ENCODE measurements at regions of chr19 and their contacts with region 1.

Region 1: GRCh38 chr19:17555480-17555928 is at the start of gene COLGALT1:
- DNase-seq: peak; percentile 77
- ATAC-seq: peak; percentile 94
- H3K4me3 ChIP-seq: peak within 1 kb of the TSS; percentile 88
- H3K27ac ChIP-seq: peak within 1 kb of the TSS; percentile 86
- H3K4me1 ChIP-seq: 0 out of 2 replicates have a peak, but pooled peaks cover 4% of the 10 kb centered on the region
- H3K27me3 ChIP-seq: no peaks in the 10 kb centered on the region
- CTCF ChIP-seq: no peak
- EP300 ChIP-seq: no peak
- POLR2A ChIP-seq: no peak
- RAD21 ChIP-seq: no peak
- polyA plus RNA-seq, gene COLGALT1: 1.2 to 3.5 TPM

Region 2: GRCh38 chr19:17303167-17303939 is 252.2 kb before region 1 on chr19 and contains the start of gene ABHD8:
- CTCF ChIA-PET with region 1: no interaction called
- POLR2A ChIA-PET with region 1: no interaction called
- RAD21 ChIA-PET with region 1: no interaction called
- SMC1A ChIA-PET with region 1: no interaction called
- in situ Hi-C with region 1: no loop called
- intact Hi-C with region 1: no loop called
- DNase-seq: peak; percentile 72
- ATAC-seq: peak; percentile 89
- H3K4me3 ChIP-seq: peak within 1 kb of the TSS; percentile 96
- H3K27ac ChIP-seq: peak within 1 kb of the TSS; percentile 69
- H3K4me1 ChIP-seq: peaks cover 16% of the 10 kb centered on the region
- H3K27me3 ChIP-seq: no peaks in the 10 kb centered on the region
- CTCF ChIP-seq: peak; percentile 24 to 54 (median 30); a peak in 3 of 6 replicates
- EP300 ChIP-seq: no peak
- POLR2A ChIP-seq: peak; percentile 66; the same call in 1 of the 2 replicates
- RAD21 ChIP-seq: no peak
- polyA plus RNA-seq, gene ABHD8: 0.03 to 0.04 TPM

Region 3: GRCh38 chr19:17511724-17512573 is 43.6 kb before region 1 on chr19:
- CTCF ChIA-PET with region 1: interaction called, 9 read pairs
- POLR2A ChIA-PET with region 1: interaction called, 5 read pairs
- RAD21 ChIA-PET with region 1: interaction called, 6 read pairs
- SMC1A ChIA-PET with region 1: interaction called, 5 read pairs
- in situ Hi-C with region 1: no loop called
- intact Hi-C with region 1: loop called (anchors 5 kb)
- DNase-seq: peak; percentile 77
- ATAC-seq: peak; percentile 88
- H3K4me3 ChIP-seq: peak overlapping the region; percentile 88
- H3K27ac ChIP-seq: peak overlapping the region; percentile 97
- H3K4me1 ChIP-seq: peaks cover 8% of the 10 kb centered on the region
- H3K27me3 ChIP-seq: no peaks in the 10 kb centered on the region
- CTCF ChIP-seq: peak; percentile 30 to 57 (median 37); a peak in 5 of 6 replicates
- EP300 ChIP-seq: peak; percentile 46 to 64; a peak in 1 of 4 replicates
- POLR2A ChIP-seq: peak; percentile 87
- RAD21 ChIP-seq: peak; percentile 22; the same call in 1 of the 2 replicates

Region 4: DNA sequence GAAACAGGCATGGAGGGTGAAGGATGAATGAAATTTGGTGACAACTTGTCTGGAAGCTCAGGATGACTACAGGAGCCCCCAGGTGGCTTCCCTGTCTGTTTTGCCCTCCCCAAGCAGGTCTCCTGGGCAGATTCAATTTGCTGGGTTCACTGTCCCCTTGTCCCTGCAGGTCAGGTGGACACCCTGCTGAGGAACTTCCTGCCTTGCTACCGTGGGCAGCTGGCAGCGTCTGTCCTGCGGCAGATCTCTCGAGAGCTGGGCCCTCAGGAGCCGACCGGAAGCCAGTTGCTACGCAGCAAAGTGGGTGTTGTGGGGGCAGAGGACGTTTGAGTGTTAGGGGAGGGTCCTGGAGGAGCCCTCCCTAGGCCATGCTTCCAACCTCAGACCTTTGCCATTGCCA is 24.9 kb before region 1 on chr19:
- CTCF ChIA-PET with region 1: interaction called, 3 read pairs
- POLR2A ChIA-PET with region 1: interaction called, 3 read pairs
- RAD21 ChIA-PET with region 1: interaction called, 4 read pairs
- SMC1A ChIA-PET with region 1: interaction called, 10 read pairs
- in situ Hi-C with region 1: no loop called
- intact Hi-C with region 1: no loop called
- DNase-seq: no peak
- ATAC-seq: no peak
- H3K4me3 ChIP-seq: no peak overlapping the region
- H3K27ac ChIP-seq: no peak overlapping the region
- H3K4me1 ChIP-seq: peaks cover 41% of the 10 kb centered on the region
- H3K27me3 ChIP-seq: no peaks in the 10 kb centered on the region
- CTCF ChIP-seq: no peak
- EP300 ChIP-seq: no peak
- POLR2A ChIP-seq: no peak
- RAD21 ChIP-seq: no peak

Region 5: DNA sequence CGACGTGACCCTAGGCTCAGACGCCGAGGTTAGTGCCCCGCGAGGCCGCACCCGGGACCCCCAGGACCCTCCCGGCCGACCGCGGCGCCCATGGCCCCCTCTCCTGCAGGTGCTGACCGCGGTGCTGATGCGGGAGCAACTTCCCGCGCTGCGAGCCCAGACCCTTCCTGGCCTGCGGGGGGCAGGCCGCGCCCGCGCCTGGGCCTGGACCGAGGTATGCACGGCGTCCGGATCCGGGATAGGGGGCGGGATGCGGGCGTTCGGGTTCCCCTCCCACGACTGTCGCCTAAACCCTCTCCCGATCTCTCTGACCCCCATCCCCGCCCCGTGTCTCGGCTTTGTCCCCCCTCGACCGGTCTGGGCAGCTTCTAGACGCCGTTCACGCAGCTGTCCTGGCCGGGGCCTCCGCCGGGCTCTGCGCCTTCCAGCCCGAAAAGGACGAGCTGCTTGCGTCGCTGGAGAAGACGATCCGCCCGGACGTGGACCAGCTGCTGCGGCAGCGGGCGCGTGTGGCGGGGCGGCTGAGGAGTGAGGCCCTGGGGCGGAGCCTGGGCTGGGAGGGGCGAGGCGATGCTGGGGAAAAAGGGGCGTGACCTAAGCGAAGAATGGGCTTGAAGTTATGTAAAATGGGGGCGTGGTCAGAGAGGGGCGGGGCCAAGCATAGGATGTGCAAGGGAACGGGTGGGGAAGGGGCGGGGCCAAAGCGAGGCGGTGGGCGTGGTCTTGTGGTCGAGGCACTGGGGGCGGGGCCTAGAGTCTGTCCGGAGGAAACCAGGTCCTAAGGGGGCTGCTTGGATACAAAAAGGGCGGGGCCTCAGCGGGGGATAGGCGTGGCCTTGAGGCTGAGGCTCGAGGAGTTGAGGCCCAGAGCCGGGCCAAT is 16.0 kb before region 1 on chr19:
- CTCF ChIA-PET with region 1: no interaction called
- POLR2A ChIA-PET with region 1: interaction called, 3 read pairs
- RAD21 ChIA-PET with region 1: no interaction called
- SMC1A ChIA-PET with region 1: interaction called, 3 read pairs
- in situ Hi-C with region 1: no loop called
- intact Hi-C with region 1: loop called (anchors 2 kb)
- DNase-seq: no peak
- ATAC-seq: peak; percentile 92
- H3K4me3 ChIP-seq: peak overlapping the region; percentile 47; the same call in 1 of the 2 replicates
- H3K27ac ChIP-seq: no peak overlapping the region
- H3K4me1 ChIP-seq: peaks cover 13% of the 10 kb centered on the region
- H3K27me3 ChIP-seq: no peaks in the 10 kb centered on the region
- CTCF ChIP-seq: 0 out of 6 replicates have a peak, but pooled peaks of 1 of the 3 experiments have one; percentile 1
- EP300 ChIP-seq: no peak
- POLR2A ChIP-seq: peak; percentile 66; the same call in 1 of the 2 replicates
- RAD21 ChIP-seq: peak; percentile 40; the same call in 1 of the 2 replicates

Region 6: DNA sequence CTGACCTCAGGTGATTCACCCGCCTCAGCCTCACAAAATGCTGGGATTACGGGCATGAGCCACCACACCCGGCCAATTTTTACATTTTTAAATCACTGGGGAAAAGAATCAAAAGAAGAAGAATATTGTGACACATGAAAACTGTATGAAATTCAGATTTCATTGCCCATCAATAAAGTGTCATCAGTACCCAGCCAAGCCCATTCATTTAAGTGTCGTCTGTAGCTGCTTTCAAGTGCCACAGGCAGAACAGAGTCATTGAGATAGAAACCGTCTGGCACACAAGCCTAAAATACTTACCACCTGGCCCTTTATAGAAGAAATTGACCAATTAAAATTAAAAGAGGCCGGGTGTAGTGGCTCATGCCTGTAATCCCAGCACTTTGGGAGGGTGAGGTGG is 15.3 kb after region 1 on chr19:
- CTCF ChIA-PET with region 1: interaction called, 19 read pairs
- POLR2A ChIA-PET with region 1: no interaction called
- RAD21 ChIA-PET with region 1: interaction called, 3 read pairs
- SMC1A ChIA-PET with region 1: interaction called, 5 read pairs
- in situ Hi-C with region 1: no loop called
- intact Hi-C with region 1: no loop called
- DNase-seq: no peak
- ATAC-seq: no peak
- H3K4me3 ChIP-seq: no peak overlapping the region
- H3K27ac ChIP-seq: no peak overlapping the region
- H3K4me1 ChIP-seq: no peaks in the 10 kb centered on the region
- H3K27me3 ChIP-seq: no peaks in the 10 kb centered on the region
- CTCF ChIP-seq: no peak
- EP300 ChIP-seq: no peak
- POLR2A ChIP-seq: no peak
- RAD21 ChIP-seq: no peak

Measured in GM12878 (cell line).